ENCODE measurements at regions of chr5 and their contacts with region 1.

Region 1: DNA sequence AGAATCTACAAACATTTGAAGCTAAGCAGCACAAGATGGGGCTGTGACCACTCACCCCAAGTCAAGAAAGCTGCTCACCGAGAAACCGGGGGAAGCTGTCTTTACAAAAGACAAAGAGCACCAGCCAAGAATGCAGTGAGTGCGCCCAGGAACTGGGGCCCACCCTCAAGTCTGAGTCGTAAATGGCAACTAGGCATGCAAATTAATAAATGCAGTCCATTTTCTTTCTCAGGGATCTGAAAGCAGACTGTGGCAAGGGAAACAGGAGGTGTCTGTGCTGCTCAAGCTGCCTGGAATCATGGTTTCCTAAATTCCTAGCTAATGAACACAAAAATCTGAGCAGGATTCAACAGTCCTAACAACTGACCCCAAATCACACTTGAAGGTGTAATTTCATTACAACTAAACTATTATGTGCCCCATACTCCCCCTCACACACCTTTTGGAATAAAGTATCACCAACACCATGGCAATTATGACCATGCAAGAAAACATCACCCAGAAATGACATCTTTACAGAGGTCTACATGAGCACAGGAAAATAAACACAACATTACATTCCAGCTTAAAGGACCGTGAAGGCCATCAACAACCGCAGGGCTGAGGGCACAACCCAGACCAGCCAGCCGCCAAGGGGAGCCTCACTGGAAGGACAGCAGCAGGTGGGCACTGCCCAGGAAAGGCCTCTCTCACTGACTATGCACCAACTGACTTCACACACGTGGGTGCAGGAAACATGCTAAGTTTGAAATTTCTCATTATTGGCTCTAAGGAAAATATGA is 17.6 kb downstream of the NSUN2 start:
- DNase-seq: no peak
- ATAC-seq: no peak

Region 2: GRCh38 chr5:6745706-6746222 is 130.5 kb after region 1 on chr5:
- intact Hi-C with region 1: loop called (anchors 10 kb)
- DNase-seq: no peak
- ATAC-seq: peak; percentile 78

Measured in left ventricle myocardium superior (tissue), 1 donor.